Activated CD4-positive, alpha-beta T cell treated with anti-CD3 and anti-CD28 coated beads for 36 hours (primary cell): ENCODE measurements at regions of chr20 and their contacts with region 1.

Region 1: GRCh38 chr20:49278036-49278817 is at the start of gene ZNFX1:
- DNase-seq: peak; percentile 100
- ATAC-seq: peak; percentile 80
- H3K4me3 Mint-ChIP-seq: peak within 1 kb of the TSS; percentile 92
- H3K27ac Mint-ChIP-seq: peak within 1 kb of the TSS; percentile 98
- H3K4me1 Mint-ChIP-seq: peaks cover 52% of the 10 kb centered on the region
- H3K27me3 Mint-ChIP-seq: no peaks in the 10 kb centered on the region
- total RNA-seq, gene ZNFX1: 36.4 to 43.8 TPM

Region 2: GRCh38 chr20:48828022-48828743 is 450.0 kb before region 1 on chr20:
- CTCF ChIA-PET with region 1: no interaction called
- POLR2A ChIA-PET with region 1: no interaction called
- intact Hi-C with region 1: loop called in 1 of 2 experiments (anchors 5 kb)
- DNase-seq: peak; percentile 78
- ATAC-seq: peak; percentile 14
- H3K4me3 Mint-ChIP-seq: peak overlapping the region; percentile 66
- H3K27ac Mint-ChIP-seq: peak overlapping the region; percentile 57
- H3K4me1 Mint-ChIP-seq: peaks cover 38% of the 10 kb centered on the region
- H3K27me3 Mint-ChIP-seq: peaks cover 21% of the 10 kb centered on the region

Region 3: GRCh38 chr20:49161428-49162152 is 116.6 kb before region 1 on chr20:
- CTCF ChIA-PET with region 1: interaction called, 3 read pairs
- POLR2A ChIA-PET with region 1: interaction called, 13 read pairs
- intact Hi-C with region 1: loop called (anchors 2 to 5 kb)
- DNase-seq: no peak
- ATAC-seq: no peak
- H3K4me3 Mint-ChIP-seq: no peak overlapping the region
- H3K27ac Mint-ChIP-seq: peak overlapping the region; percentile 10
- H3K4me1 Mint-ChIP-seq: peaks cover 67% of the 10 kb centered on the region
- H3K27me3 Mint-ChIP-seq: no peaks in the 10 kb centered on the region

Region 4: GRCh38 chr20:49219089-49219923 is 58.9 kb before region 1 on chr20 and contains the start of gene DDX27:
- CTCF ChIA-PET with region 1: interaction called, 4 read pairs
- POLR2A ChIA-PET with region 1: interaction called, 3 read pairs
- intact Hi-C with region 1: loop called (anchors 1 to 2 kb)
- DNase-seq: peak; percentile 98
- ATAC-seq: peak; percentile 90
- H3K4me3 Mint-ChIP-seq: peak within 1 kb of the TSS; percentile 96
- H3K27ac Mint-ChIP-seq: peak within 1 kb of the TSS; percentile 99
- H3K4me1 Mint-ChIP-seq: peaks cover 29% of the 10 kb centered on the region
- H3K27me3 Mint-ChIP-seq: no peaks in the 10 kb centered on the region
- total RNA-seq, gene DDX27: 48.5 to 54.0 TPM

Region 5: GRCh38 chr20:49400410-49400809 is 122.2 kb after region 1 on chr20:
- CTCF ChIA-PET with region 1: no interaction called
- POLR2A ChIA-PET with region 1: no interaction called
- intact Hi-C with region 1: no loop called
- DNase-seq: no peak
- ATAC-seq: no peak
- H3K4me3 Mint-ChIP-seq: no peak overlapping the region
- H3K27ac Mint-ChIP-seq: no peak overlapping the region
- H3K4me1 Mint-ChIP-seq: no peaks in the 10 kb centered on the region
- H3K27me3 Mint-ChIP-seq: peaks cover 5% of the 10 kb centered on the region

Region 6: DNA sequence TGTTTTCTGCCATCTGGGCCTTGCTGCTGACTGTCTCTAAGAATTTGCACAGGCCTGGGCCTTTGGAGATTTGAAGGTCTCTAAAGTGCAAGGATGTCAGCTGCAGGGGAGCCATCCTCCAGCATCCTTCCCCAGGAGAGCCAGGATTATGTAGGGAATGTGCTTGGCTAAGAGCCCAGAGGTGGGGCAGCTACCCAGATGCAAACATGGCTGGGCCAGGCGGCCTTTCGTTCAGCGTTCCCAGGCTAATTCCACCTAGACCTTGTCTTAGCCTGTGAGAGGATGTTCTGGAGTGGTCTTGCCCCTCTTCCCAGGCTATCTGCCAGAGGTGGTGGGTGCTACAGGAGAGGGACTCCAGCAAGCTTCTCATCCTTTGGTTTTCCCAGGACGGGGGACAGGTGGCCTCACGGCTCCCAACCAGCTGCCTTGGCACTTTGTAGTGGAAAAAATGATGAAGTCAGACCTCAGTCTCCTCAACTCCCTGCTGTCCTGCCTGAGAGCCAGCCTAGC is 297.4 kb after region 1 on chr20:
- CTCF ChIA-PET with region 1: no interaction called
- POLR2A ChIA-PET with region 1: no interaction called
- intact Hi-C with region 1: no loop called
- DNase-seq: no peak
- ATAC-seq: no peak
- H3K4me3 Mint-ChIP-seq: no peak overlapping the region
- H3K27ac Mint-ChIP-seq: no peak overlapping the region
- H3K4me1 Mint-ChIP-seq: peaks cover 11% of the 10 kb centered on the region
- H3K27me3 Mint-ChIP-seq: peaks cover 23% of the 10 kb centered on the region

Region 7: DNA sequence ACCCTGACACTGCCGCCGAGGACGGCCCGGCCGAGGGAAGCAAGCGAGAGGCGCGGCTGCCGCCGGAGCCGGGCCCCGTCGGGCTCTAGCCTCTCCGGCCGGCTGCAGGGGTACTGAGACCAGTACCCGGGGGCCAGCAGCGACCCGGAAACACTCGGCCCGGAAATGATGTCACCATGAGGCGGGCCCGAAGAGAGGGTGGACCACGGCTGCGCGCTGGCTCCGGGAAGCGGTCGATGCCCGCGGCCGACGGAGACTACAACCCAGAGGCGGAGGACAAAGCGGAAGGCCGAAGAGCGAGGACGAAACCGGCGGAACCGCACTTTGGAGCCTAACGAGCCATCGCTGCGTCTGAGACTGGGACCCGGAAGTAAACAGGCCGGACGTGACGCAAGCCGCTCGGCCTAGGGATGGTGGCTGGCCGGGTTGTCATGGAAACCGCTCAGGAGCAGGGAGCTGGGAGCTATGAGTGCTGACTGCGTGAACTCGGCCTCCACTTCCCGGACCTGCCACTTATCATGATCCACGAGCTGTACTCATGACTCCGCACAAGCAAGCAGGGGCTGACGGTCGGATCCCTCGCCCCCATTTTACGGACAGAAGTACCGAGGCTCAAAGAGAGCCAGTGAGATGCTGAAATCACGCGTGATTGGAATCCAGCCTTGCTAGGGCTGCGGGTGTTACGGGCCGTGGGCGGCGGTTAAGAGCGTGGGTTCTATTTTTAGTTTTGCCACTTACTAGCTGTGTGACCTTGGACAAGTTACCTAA is 637.3 kb after region 1 on chr20 and contains the start of gene SPATA2:
- CTCF ChIA-PET with region 1: no interaction called
- POLR2A ChIA-PET with region 1: no interaction called
- intact Hi-C with region 1: loop called in 1 of 2 experiments (anchors 1 kb)
- DNase-seq: peak; percentile 96
- ATAC-seq: peak; percentile 83
- H3K4me3 Mint-ChIP-seq: peak within 1 kb of the TSS; percentile 99
- H3K27ac Mint-ChIP-seq: peak within 1 kb of the TSS; percentile 100
- H3K4me1 Mint-ChIP-seq: peaks cover 27% of the 10 kb centered on the region
- H3K27me3 Mint-ChIP-seq: no peaks in the 10 kb centered on the region
- total RNA-seq, gene SPATA2: 8.7 to 10.1 TPM

Region 8: GRCh38 chr20:50929299-50930138 is 1651.3 kb after region 1 on chr20:
- CTCF ChIA-PET with region 1: no interaction called
- POLR2A ChIA-PET with region 1: no interaction called
- intact Hi-C with region 1: loop called in 1 of 2 experiments (anchors 10 kb)
- DNase-seq: peak; percentile 98
- ATAC-seq: peak; percentile 80
- H3K4me3 Mint-ChIP-seq: peak overlapping the region; percentile 92
- H3K27ac Mint-ChIP-seq: peak overlapping the region; percentile 95
- H3K4me1 Mint-ChIP-seq: peaks cover 55% of the 10 kb centered on the region
- H3K27me3 Mint-ChIP-seq: no peaks in the 10 kb centered on the region